PC-3 (cell line): ENCODE measurements at regions of chr16 and their contacts with region 1.

Region 1: GRCh38 chr16:788394-789126 is at the start of gene CHTF18:
- DNase-seq: peak; percentile 88
- ATAC-seq: peak; percentile 77
- H3K4me3 ChIP-seq: peak within 1 kb of the TSS; percentile 95
- H3K27ac ChIP-seq: no peak within 1 kb of the TSS
- H3K4me1 ChIP-seq: peaks cover 10% of the 10 kb centered on the region
- H3K27me3 ChIP-seq: no peaks in the 10 kb centered on the region
- CTCF ChIP-seq: no peak
- total RNA-seq, gene CHTF18: 79.0 and 107 TPM in 2 replicates

Region 2: GRCh38 chr16:626787-627186 is 161.8 kb before region 1 on chr16:
- CTCF ChIA-PET with region 1: no interaction called
- POLR2A ChIA-PET with region 1: no interaction called
- intact Hi-C with region 1: no loop called
- DNase-seq: peak; percentile 92
- ATAC-seq: peak; percentile 84
- H3K4me3 ChIP-seq: peak overlapping the region; percentile 27; the same call in 1 of the 2 replicates
- H3K27ac ChIP-seq: peak overlapping the region; percentile 44
- H3K4me1 ChIP-seq: peaks cover 28% of the 10 kb centered on the region
- H3K27me3 ChIP-seq: no peaks in the 10 kb centered on the region
- CTCF ChIP-seq: no peak

Region 3: GRCh38 chr16:674968-675883 is 113.3 kb before region 1 on chr16 and contains the start of gene RHBDL1:
- CTCF ChIA-PET with region 1: no interaction called
- POLR2A ChIA-PET with region 1: interaction called, 11 read pairs
- intact Hi-C with region 1: no loop called
- DNase-seq: no peak
- ATAC-seq: no peak
- H3K4me3 ChIP-seq: no peak within 1 kb of the TSS
- H3K27ac ChIP-seq: no peak within 1 kb of the TSS
- H3K4me1 ChIP-seq: no peaks in the 10 kb centered on the region
- H3K27me3 ChIP-seq: no peaks in the 10 kb centered on the region
- CTCF ChIP-seq: no peak
- total RNA-seq, gene RHBDL1: 1.7 and 3.7 TPM in 2 replicates

Region 4: DNA sequence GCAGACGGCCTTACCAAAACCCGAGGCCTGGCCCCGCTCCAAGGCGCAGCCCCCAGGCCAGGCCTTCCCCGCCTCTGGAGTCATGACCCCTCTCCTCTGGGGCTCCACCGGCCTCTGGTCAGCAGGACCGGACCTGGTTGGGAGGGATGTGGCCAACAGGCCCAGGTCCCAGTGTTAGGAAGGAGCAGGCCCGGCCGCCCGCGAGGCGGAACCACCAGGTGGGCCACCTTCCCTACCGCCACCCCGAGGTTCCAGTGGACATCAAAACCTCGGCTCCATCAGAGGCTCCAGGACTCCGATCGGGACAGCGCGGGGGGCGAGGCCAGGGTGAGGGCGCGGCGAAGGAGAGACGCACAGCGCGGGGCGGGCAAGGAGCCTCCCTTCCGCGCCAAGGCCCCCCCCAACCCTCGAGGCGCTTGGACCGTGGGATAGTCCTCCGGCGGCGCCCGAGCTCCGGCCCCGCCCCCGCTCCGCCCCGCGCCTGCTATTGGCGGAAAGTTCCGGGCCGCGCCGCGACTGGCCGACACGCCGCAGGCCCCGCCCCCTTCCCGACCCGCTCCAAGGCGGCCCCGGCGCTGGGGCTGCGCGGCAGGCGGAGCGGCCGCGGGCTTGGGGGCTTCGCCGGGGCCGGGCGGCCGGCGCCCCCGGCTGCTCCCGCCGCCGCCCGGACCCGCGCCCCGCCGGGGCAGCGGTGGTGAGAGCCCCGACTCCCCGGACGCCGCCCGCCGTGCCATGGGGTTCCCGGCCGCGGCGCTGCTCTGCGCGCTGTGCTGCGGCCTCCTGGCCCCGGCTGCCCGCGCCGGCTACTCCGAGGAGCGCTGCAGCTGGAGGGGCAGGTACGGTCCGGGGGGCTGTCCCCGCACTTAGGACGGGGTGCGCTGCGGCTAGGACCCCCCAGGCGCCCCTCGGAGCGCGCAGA is 73.7 kb before region 1 on chr16 and contains the start of gene METRN:
- CTCF ChIA-PET with region 1: interaction called, 9 read pairs
- POLR2A ChIA-PET with region 1: interaction called, 3 read pairs
- intact Hi-C with region 1: loop called (anchors 10 kb)
- DNase-seq: peak; percentile 84
- ATAC-seq: peak; percentile 58
- H3K4me3 ChIP-seq: peak within 1 kb of the TSS; percentile 71
- H3K27ac ChIP-seq: peak within 1 kb of the TSS; percentile 63
- H3K4me1 ChIP-seq: peaks cover 28% of the 10 kb centered on the region
- H3K27me3 ChIP-seq: 0 out of 2 replicates have a peak, but pooled peaks cover 2% of the 10 kb centered on the region
- CTCF ChIP-seq: no peak
- total RNA-seq, gene METRN: 314 and 320 TPM in 2 replicates